Right ventricle myocardium inferior (tissue), 1 donor: ENCODE measurements at regions of chr4 and their contacts with region 1.

Region 1: GRCh38 chr4:159206427-159206871 is 103.6 kb downstream of the RAPGEF2 start:
- DNase-seq: no peak
- ATAC-seq: no peak

Region 2: DNA sequence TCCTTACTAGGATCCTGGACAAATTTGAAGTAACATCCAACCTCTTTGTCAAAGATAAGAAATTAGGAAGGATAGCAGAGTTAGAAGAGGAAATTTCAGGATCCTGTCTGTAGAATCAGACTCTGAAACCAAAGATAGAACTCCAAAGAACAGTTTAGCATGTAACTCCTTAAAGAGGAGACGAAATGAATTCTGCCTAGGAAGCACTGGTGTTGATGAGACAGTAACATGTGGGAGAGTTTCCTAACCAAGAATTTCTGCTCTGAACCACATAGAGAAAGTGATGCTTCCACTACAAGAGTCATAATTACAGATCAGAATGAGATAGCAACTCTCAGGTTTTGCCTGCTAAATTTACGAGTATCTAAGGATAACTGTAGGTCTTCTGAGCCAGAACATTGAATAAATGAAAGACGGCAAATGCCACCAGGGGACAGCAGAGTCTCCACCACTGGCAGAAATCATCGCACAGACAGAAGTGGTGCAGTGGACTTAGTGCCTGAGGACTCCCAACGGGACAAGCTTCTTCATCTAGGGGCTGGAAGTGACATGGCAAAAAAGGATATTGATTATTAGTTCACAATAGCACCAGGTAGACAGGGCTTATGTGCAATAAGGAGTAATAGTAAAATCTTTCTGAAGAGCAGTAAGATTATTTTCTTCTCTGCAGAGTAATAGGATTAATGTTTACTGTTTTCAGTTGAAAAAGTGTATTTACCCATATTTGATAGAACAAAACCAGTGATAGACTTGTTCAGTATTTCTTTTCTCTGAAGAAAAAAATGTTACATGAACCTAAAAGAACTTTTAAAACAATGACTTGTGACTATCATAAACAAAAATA is 476.5 kb before region 1 on chr4:
- intact Hi-C with region 1: loop called (anchors 2 kb)
- DNase-seq: no peak
- ATAC-seq: peak; percentile 93

Region 3: DNA sequence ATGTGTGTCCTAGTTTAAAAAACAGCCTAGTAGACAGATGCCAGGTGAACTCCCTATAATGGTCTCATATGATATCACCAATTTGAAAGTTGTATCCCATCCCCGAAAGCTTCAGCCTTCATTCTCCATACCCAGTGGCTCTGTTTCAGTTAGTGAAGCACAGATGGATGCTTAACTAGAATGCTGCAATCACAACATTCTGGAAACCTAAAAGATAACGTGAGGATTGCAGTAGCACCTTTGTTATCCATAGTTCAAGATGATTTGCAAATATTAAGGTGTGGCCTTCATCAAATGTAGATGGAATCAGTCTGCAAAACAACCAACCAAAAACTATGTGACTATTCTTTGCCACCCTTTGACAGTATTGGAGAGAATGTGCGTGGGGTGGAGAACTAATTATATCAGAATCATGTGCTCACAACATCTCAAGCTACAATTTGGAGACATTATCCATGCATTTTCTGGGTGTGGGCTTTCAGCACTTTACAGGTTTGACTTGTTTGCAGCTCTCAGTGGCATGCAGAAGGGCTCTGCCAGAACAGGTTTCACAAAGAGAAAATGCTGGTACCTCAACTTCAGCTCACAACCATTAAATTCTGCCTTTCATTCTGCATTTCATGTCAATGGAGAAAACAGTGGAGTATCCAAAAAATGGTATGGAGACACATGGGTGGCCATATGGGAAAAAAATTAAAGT is 465.0 kb before region 1 on chr4:
- intact Hi-C with region 1: no loop called
- DNase-seq: no peak
- ATAC-seq: no peak

Region 4: GRCh38 chr4:158856852-158857251 is 349.6 kb before region 1 on chr4:
- intact Hi-C with region 1: loop called (anchors 2 kb)
- DNase-seq: no peak
- ATAC-seq: peak; percentile 61